CD4-positive, alpha-beta T cell (primary cell): ENCODE measurements at regions of chr15 and their contacts with region 1.

Region 1: GRCh38 chr15:55290528-55291057 is 980 bp upstream of the RAB27A start:
- DNase-seq: peak; percentile 74 to 91 (median 82)
- ATAC-seq: peak; percentile 79
- H3K4me3 ChIP-seq: peak overlapping the region; percentile 88
- H3K4me3 Mint-ChIP-seq: peak overlapping the region; percentile 96
- H3K27ac ChIP-seq: peak overlapping the region; percentile 87 to 90
- H3K27ac Mint-ChIP-seq: peak overlapping the region; percentile 94
- H3K4me1 ChIP-seq: peaks cover 33% of the 10 kb centered on the region
- H3K4me1 Mint-ChIP-seq: peaks cover 32% of the 10 kb centered on the region
- H3K27me3 ChIP-seq: no peaks in the 10 kb centered on the region
- H3K27me3 Mint-ChIP-seq: no peaks in the 10 kb centered on the region
- CTCF ChIP-seq: peak; percentile 90

Region 2: GRCh38 chr15:54082836-54083492 is 1207.6 kb before region 1 on chr15:
- CTCF ChIA-PET with region 1: no interaction called
- POLR2A ChIA-PET with region 1: no interaction called
- intact Hi-C with region 1: loop called in 1 of 2 experiments (anchors 10 kb)
- DNase-seq: peak in 3 of 14 experiments; percentile 6 to 8 (median 6)
- ATAC-seq: no peak
- H3K4me3 ChIP-seq: no peak overlapping the region
- H3K4me3 Mint-ChIP-seq: no peak overlapping the region
- H3K27ac ChIP-seq: no peak overlapping the region
- H3K27ac Mint-ChIP-seq: no peak overlapping the region
- H3K4me1 ChIP-seq: no peaks in the 10 kb centered on the region
- H3K4me1 Mint-ChIP-seq: no peaks in the 10 kb centered on the region
- H3K27me3 ChIP-seq: no peaks in the 10 kb centered on the region
- H3K27me3 Mint-ChIP-seq: peaks cover 14% of the 10 kb centered on the region
- CTCF ChIP-seq: no peak

Region 3: GRCh38 chr15:54638666-54639065 is 651.9 kb before region 1 on chr15:
- CTCF ChIA-PET with region 1: no interaction called
- POLR2A ChIA-PET with region 1: no interaction called
- intact Hi-C with region 1: no loop called
- DNase-seq: no peak
- ATAC-seq: no peak
- H3K4me3 ChIP-seq: no peak overlapping the region
- H3K4me3 Mint-ChIP-seq: no peak overlapping the region
- H3K27ac ChIP-seq: no peak overlapping the region
- H3K27ac Mint-ChIP-seq: no peak overlapping the region
- H3K4me1 ChIP-seq: no peaks in the 10 kb centered on the region
- H3K4me1 Mint-ChIP-seq: no peaks in the 10 kb centered on the region
- H3K27me3 ChIP-seq: no peaks in the 10 kb centered on the region
- H3K27me3 Mint-ChIP-seq: no peaks in the 10 kb centered on the region
- CTCF ChIP-seq: no peak

Region 4: DNA sequence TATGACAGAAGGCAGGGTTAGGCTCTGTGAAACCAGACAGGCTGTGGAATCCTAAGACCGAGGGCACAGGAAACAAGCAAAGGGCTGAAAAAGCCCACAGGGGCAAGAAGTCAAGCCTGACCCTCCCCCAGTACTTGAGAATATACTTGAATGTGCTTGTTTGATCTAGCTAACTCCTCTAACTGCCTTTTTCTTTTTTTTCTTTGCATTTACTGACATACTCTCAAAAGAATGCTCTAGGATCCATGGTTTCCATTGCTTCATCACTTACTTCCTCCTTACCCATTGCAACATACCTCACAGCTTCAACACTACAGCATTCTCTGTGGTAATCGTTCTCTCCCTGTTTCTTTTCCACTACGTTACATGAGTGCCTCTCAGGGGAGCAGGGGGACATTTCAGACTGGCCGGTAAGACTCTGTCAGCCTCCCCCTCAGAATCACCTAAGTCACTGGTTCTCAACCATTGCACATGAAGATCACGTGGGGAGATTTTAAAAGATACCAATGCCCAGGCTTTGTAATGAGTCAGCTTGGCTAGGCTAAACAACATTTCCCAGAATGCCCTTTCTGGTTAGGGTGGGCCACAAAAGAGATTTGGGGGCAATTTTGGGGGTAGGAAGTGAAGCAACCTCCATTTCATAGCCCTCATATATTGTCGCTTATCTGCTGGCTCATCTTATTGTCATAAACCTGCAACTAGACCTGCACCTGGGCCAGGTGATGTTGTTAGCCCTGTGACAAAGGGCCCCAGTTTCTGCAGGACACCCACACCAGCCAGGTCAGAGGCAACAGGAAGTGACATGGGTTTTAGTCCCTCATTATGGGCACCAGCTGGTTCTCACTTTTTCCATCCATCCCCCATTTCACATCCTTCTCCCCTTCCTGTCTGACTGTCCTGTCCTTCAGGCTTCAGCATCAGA is 69.2 kb before region 1 on chr15:
- CTCF ChIA-PET with region 1: interaction called, 10 read pairs
- POLR2A ChIA-PET with region 1: interaction called, 4 read pairs
- intact Hi-C with region 1: loop called (anchors 1 kb)
- DNase-seq: peak in 3 of 14 experiments; percentile 41 to 49 (median 48)
- ATAC-seq: no peak
- H3K4me3 ChIP-seq: no peak overlapping the region
- H3K4me3 Mint-ChIP-seq: no peak overlapping the region
- H3K27ac ChIP-seq: no peak overlapping the region
- H3K27ac Mint-ChIP-seq: peak overlapping the region; percentile 18
- H3K4me1 ChIP-seq: peaks cover 47% of the 10 kb centered on the region
- H3K4me1 Mint-ChIP-seq: peaks cover 66% of the 10 kb centered on the region
- H3K27me3 ChIP-seq: no peaks in the 10 kb centered on the region
- H3K27me3 Mint-ChIP-seq: no peaks in the 10 kb centered on the region
- CTCF ChIP-seq: no peak

Region 5: DNA sequence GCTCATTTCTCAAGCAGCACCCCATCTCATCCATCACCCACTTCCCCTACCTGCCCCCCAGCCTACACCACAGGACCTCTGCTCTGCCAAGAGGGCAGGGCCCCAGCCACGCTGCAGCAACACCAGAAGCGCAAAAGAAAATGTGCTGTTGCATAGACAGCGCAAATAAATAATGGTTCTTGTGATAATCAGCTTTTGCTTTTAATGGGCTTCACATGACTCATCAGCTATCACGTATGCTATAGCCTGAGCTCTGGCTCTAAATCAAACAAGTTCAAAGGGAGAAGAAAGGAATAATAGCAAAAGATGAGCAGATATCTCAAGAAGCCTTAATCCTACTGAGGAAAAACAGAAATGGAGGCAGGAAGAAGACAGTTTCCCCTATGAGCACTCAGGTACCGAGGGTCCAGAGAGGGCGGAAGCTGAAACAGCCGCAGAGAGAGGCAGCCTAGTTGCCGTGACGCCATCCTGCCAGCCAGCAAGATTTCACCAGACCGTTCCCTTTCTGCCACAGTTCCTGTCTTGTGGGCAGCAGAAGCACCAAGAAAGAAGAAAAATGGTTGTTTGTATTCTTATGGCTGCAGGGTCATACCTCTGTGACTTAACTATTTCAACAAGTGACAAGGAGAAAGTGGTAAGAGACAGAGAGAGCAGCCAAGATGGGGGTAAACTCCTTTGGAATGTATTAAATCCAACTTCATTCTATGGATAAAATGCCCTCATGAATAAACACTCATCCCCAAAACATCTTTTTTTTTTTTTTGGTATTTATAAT is 23.0 kb before region 1 on chr15:
- CTCF ChIA-PET with region 1: interaction called, 3 read pairs
- POLR2A ChIA-PET with region 1: interaction called, 14 read pairs
- intact Hi-C with region 1: loop called in 1 of 2 experiments (anchors 2 kb)
- DNase-seq: peak; percentile 51 to 92 (median 66)
- ATAC-seq: peak; percentile 90
- H3K4me3 ChIP-seq: peak overlapping the region; percentile 45
- H3K4me3 Mint-ChIP-seq: peak overlapping the region; percentile 70
- H3K27ac ChIP-seq: peak overlapping the region; percentile 52 to 82
- H3K27ac Mint-ChIP-seq: peak overlapping the region; percentile 89
- H3K4me1 ChIP-seq: peaks cover 42% of the 10 kb centered on the region
- H3K4me1 Mint-ChIP-seq: peaks cover 60% of the 10 kb centered on the region
- H3K27me3 ChIP-seq: no peaks in the 10 kb centered on the region
- H3K27me3 Mint-ChIP-seq: no peaks in the 10 kb centered on the region
- CTCF ChIP-seq: no peak

Region 6: GRCh38 chr15:55318588-55319494 is 28.2 kb after region 1 on chr15 and contains the starts of genes PIGB and PIGBOS1:
- CTCF ChIA-PET with region 1: no interaction called
- POLR2A ChIA-PET with region 1: interaction called, 5 read pairs
- intact Hi-C with region 1: loop called in 1 of 2 experiments (anchors 2 kb)
- DNase-seq: peak; percentile 62 to 90 (median 70)
- ATAC-seq: peak; percentile 90
- H3K4me3 ChIP-seq: peak within 1 kb of the TSS; percentile 69
- H3K4me3 Mint-ChIP-seq: peak within 1 kb of the TSS; percentile 99
- H3K27ac ChIP-seq: peak within 1 kb of the TSS; percentile 88 to 93
- H3K27ac Mint-ChIP-seq: peak within 1 kb of the TSS; percentile 100
- H3K4me1 ChIP-seq: peaks cover 33% of the 10 kb centered on the region
- H3K4me1 Mint-ChIP-seq: peaks cover 80% of the 10 kb centered on the region
- H3K27me3 ChIP-seq: no peaks in the 10 kb centered on the region
- H3K27me3 Mint-ChIP-seq: no peaks in the 10 kb centered on the region
- CTCF ChIP-seq: no peak
- total RNA-seq, gene PIGB: 21.5 to 21.6 TPM
- total RNA-seq, gene PIGBOS1: 6.2 to 10.1 TPM